ENCODE measurements at regions of chr2 and their contacts with region 1.

Region 1: GRCh38 chr2:173874894-173875237 is 90.3 kb downstream of the SP3 start:
- DNase-seq: no peak
- H3K4me3 ChIP-seq: no peak overlapping the region
- H3K27ac ChIP-seq: no peak overlapping the region
- H3K4me1 ChIP-seq: peaks cover 0 to 3% (median 0%) of the 10 kb centered on the region in 4 experiments; a peak in 1 of 7 replicates
- H3K27me3 ChIP-seq: no peaks in the 10 kb centered on the region
- CTCF ChIP-seq: no peak
- EP300 ChIP-seq: no peak
- POLR2A ChIP-seq: no peak
- RAD21 ChIP-seq: no peak

Region 2: GRCh38 chr2:173862612-173863217 is 12.2 kb before region 1 on chr2:
- CTCF ChIA-PET with region 1: interaction called, 12 read pairs
- POLR2A ChIA-PET with region 1: no interaction called
- DNase-seq: no peak
- H3K4me3 ChIP-seq: no peak overlapping the region
- H3K27ac ChIP-seq: no peak overlapping the region
- H3K4me1 ChIP-seq: no peaks in the 10 kb centered on the region; a peak in 1 of 7 replicates
- H3K27me3 ChIP-seq: peaks cover 0 to 2% (median 0%) of the 10 kb centered on the region in 4 experiments; a peak in 1 of 7 replicates
- CTCF ChIP-seq: no peak
- EP300 ChIP-seq: no peak
- POLR2A ChIP-seq: no peak
- RAD21 ChIP-seq: no peak

Region 3: GRCh38 chr2:173947131-173947530 is 72.3 kb after region 1 on chr2:
- CTCF ChIA-PET with region 1: no interaction called
- POLR2A ChIA-PET with region 1: no interaction called
- DNase-seq: no peak
- H3K4me3 ChIP-seq: no peak overlapping the region
- H3K27ac ChIP-seq: no peak overlapping the region
- H3K4me1 ChIP-seq: no peaks in the 10 kb centered on the region
- H3K27me3 ChIP-seq: no peaks in the 10 kb centered on the region
- CTCF ChIP-seq: no peak
- EP300 ChIP-seq: no peak
- POLR2A ChIP-seq: no peak
- RAD21 ChIP-seq: no peak